Panc1 (cell line): ENCODE measurements at regions of chr6 and their contacts with region 1.

Region 1: DNA sequence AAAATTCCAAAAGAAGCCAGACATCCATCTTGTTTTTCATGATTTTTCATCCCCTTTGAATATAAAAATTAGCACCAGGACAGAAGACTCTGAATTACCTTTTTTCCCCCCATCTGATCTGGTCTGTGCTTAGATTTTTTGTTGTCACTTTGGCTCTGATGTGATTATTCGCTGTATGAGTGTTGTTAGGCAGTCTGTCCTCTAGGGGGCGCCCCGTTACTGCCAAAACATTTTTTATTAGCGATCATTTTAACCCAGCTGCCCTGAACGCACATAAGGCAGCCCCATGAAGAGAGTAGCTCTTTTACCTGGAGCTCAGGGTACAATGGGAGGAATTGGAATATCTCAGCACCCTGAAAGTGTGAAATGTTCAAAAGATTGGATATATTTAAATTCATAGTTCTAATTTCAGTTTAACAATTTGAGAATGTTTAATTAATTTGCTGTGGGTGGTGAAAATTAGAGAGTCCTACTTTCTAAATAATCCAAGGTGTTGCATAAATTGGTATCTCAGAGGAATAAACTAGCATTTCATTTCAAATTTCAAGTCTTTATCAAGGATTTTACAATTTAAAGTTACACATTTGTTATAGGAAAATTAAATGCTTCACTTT is 60.8 kb downstream of the PRPH2 start:
- DNase-seq: peak; percentile 27
- ATAC-seq: peak; percentile 85
- H3K4me3 ChIP-seq: no peak overlapping the region
- H3K27ac ChIP-seq: no peak overlapping the region
- H3K4me1 ChIP-seq: no peaks in the 10 kb centered on the region
- H3K27me3 ChIP-seq: no peaks in the 10 kb centered on the region
- CTCF ChIP-seq: peak; percentile 95

Region 2: DNA sequence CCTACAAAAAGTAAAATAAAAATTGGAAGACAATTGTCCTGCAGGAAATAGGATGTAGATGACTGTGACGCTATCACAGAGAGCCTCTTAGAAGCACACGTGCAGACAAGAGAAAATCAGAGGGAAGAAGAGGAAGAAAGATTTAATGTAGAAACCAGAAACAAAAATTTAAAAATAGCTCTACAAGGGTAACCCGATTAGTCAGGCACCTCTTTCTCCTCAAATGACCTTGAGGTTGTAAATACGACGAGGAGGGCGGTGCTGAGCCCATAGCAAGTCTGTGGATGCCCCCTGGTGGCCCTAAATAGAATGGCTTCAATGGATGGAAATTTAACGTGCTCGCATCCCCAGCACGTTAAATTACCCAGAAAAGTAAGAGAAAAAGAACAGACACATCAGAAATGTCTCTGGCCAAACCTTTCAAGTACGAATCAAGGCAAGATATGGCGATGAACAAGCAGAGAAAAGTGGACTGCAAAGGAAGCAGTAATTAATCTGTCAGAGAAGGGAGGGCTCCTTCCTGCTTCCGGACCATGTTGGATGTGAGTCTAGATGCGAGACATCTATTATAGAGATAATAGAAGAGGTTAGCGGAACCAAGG is 64.9 kb after region 1 on chr6:
- CTCF ChIA-PET with region 1: interaction called, 6 read pairs
- POLR2A ChIA-PET with region 1: no interaction called
- in situ Hi-C with region 1: no loop called
- intact Hi-C with region 1: loop called (anchors 1 kb)
- DNase-seq: no peak
- ATAC-seq: peak; percentile 94
- H3K4me3 ChIP-seq: no peak overlapping the region
- H3K27ac ChIP-seq: no peak overlapping the region
- H3K4me1 ChIP-seq: peaks cover 4% of the 10 kb centered on the region; the same call in 1 of the 2 replicates
- H3K27me3 ChIP-seq: no peaks in the 10 kb centered on the region
- CTCF ChIP-seq: peak; percentile 93